Heart left ventricle (tissue), 16 donors: ENCODE measurements at regions of chr9 and their contacts with region 1.

Region 1: GRCh38 chr9:86807367-86807976 is 139.8 kb downstream of the GAS1 start:
- DNase-seq: peak in 1 of 5 donors; percentile 18
- ATAC-seq: peak; percentile 27 to 63 (median 47)
- H3K4me3 ChIP-seq: no peak overlapping the region
- H3K27ac ChIP-seq: peak overlapping the region in 7 of 12 donors; percentile 26 to 70 (median 53)
- H3K4me1 ChIP-seq: peaks cover 0 to 6% (median 0%) of the 10 kb centered on the region in 12 donors
- H3K27me3 ChIP-seq: no peaks in the 10 kb centered on the region
- CTCF ChIP-seq: no peak
- POLR2A ChIP-seq: no peak

Region 2: GRCh38 chr9:86741311-86742208 is 65.9 kb before region 1 on chr9:
- intact Hi-C with region 1: loop called in 1 of 10 experiments (anchors 10 kb)
- DNase-seq: peak in 2 of 5 donors; percentile 46 to 50
- ATAC-seq: peak; percentile 41 to 95 (median 86)
- H3K4me3 ChIP-seq: no peak overlapping the region
- H3K27ac ChIP-seq: peak overlapping the region in 1 of 12 donors; percentile 45
- H3K4me1 ChIP-seq: peaks cover 0 to 9% (median 3%) of the 10 kb centered on the region in 12 donors
- H3K27me3 ChIP-seq: no peaks in the 10 kb centered on the region
- CTCF ChIP-seq: no peak
- POLR2A ChIP-seq: no peak

Region 3: DNA sequence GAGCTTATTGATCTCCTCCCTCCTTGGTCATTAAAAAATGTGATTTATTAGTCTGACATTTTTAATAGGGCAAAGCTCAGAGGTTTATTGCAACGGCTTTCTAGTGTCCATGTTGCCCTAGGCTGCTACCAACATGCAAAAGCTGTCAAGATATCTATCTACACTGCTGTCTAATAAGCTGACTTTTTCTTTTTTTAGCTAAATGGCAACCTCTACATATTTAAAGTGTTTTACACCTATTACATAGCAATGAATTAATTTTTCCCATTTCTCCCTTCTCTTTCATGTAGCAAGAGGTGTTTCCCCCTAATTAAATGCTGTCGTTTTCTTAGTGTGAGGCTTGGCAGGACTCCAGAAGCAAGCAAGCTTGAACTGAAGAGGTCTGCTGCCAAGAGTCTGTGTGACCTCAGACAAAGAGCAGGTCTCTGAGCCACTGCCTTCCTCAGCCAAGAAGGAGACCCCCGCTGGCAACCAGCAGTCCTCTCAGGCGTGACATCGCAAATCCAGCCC is 60.4 kb after region 1 on chr9:
- intact Hi-C with region 1: no loop called
- DNase-seq: no peak
- ATAC-seq: no peak
- H3K4me3 ChIP-seq: no peak overlapping the region
- H3K27ac ChIP-seq: no peak overlapping the region
- H3K4me1 ChIP-seq: no peaks in the 10 kb centered on the region
- H3K27me3 ChIP-seq: no peaks in the 10 kb centered on the region
- CTCF ChIP-seq: no peak
- POLR2A ChIP-seq: no peak